B cell (primary cell): ENCODE measurements at regions of chr5 and their contacts with region 1.

Region 1: GRCh38 chr5:159331093-159331973 is 1.0 kb upstream of the IL12B start:
- DNase-seq: peak; percentile 83
- ATAC-seq: peak; percentile 55
- H3K4me3 ChIP-seq: peak overlapping the region in 4 of 5 experiments; percentile 51 to 65 (median 56)
- H3K4me3 Mint-ChIP-seq: peak overlapping the region; percentile 93
- H3K27ac ChIP-seq: peak overlapping the region; percentile 92 to 93
- H3K27ac Mint-ChIP-seq: peak overlapping the region; percentile 98
- H3K4me1 ChIP-seq: peaks cover 40 to 55% of the 10 kb centered on the region in 2 donors
- H3K4me1 Mint-ChIP-seq: peaks cover 49% of the 10 kb centered on the region
- H3K27me3 ChIP-seq: no peaks in the 10 kb centered on the region
- H3K27me3 Mint-ChIP-seq: no peaks in the 10 kb centered on the region
- CTCF ChIP-seq: peak; percentile 83

Region 2: DNA sequence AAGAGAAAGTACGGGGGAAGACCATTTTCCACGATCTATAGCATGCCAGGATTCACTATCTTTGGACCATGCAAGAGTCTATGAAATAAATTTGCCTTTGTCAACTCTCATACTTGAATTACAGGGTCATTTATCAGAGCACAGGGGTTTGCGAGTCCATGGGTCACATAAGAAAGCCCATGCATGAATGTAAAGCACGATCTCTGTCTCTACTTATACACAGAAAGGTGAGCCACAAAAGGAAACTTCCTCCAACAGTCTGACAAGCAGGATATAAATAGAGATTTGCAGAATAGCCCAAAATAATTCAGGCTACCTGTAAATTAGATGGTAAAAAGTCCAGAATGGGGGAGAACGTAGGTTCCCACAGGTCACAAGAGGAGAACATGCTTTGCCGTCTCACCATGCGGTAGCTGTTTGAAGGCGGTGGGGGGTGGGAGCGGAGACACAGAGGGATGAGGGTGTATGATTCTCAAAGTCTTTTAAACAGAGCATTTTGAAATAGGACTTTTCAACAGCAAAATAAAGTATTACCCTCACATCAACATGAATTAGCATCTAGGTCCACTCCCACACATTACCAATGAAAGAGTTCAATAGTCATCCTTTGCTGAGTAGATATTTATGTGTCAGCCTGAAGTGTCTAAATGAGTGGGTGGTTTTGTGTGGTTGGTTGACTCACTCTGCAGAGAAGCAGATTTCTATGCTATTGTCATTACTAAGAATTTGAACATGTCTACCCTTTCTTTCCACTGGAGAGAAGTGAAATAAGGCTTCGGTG is 511.3 kb before region 1 on chr5:
- CTCF ChIA-PET with region 1: no interaction called
- POLR2A ChIA-PET with region 1: no interaction called
- intact Hi-C with region 1: loop called (anchors 10 kb)
- DNase-seq: peak; percentile 55
- ATAC-seq: peak; percentile 56
- H3K4me3 ChIP-seq: peak overlapping the region; percentile 2 to 50 (median 19)
- H3K4me3 Mint-ChIP-seq: peak overlapping the region; percentile 82
- H3K27ac ChIP-seq: peak overlapping the region; percentile 82 to 87
- H3K27ac Mint-ChIP-seq: peak overlapping the region; percentile 80
- H3K4me1 ChIP-seq: peaks cover 98 to 99% of the 10 kb centered on the region in 2 donors
- H3K4me1 Mint-ChIP-seq: peaks cover 97% of the 10 kb centered on the region
- H3K27me3 ChIP-seq: no peaks in the 10 kb centered on the region
- H3K27me3 Mint-ChIP-seq: no peaks in the 10 kb centered on the region
- CTCF ChIP-seq: no peak

Region 3: GRCh38 chr5:159310511-159310910 is 20.8 kb before region 1 on chr5:
- CTCF ChIA-PET with region 1: interaction called, 7 read pairs
- POLR2A ChIA-PET with region 1: no interaction called
- intact Hi-C with region 1: loop called (anchors 2 kb)
- DNase-seq: peak; percentile 70
- ATAC-seq: peak; percentile 91
- H3K4me3 ChIP-seq: peak overlapping the region; percentile 16 to 61 (median 36)
- H3K4me3 Mint-ChIP-seq: peak overlapping the region; percentile 76
- H3K27ac ChIP-seq: no peak overlapping the region
- H3K27ac Mint-ChIP-seq: peak overlapping the region; percentile 2
- H3K4me1 ChIP-seq: peaks cover 13 to 19% of the 10 kb centered on the region in 2 donors
- H3K4me1 Mint-ChIP-seq: peaks cover 18% of the 10 kb centered on the region
- H3K27me3 ChIP-seq: peaks cover 0 to 6% (median 2%) of the 10 kb centered on the region in 4 experiments
- H3K27me3 Mint-ChIP-seq: peaks cover 10% of the 10 kb centered on the region
- CTCF ChIP-seq: no peak

Region 4: DNA sequence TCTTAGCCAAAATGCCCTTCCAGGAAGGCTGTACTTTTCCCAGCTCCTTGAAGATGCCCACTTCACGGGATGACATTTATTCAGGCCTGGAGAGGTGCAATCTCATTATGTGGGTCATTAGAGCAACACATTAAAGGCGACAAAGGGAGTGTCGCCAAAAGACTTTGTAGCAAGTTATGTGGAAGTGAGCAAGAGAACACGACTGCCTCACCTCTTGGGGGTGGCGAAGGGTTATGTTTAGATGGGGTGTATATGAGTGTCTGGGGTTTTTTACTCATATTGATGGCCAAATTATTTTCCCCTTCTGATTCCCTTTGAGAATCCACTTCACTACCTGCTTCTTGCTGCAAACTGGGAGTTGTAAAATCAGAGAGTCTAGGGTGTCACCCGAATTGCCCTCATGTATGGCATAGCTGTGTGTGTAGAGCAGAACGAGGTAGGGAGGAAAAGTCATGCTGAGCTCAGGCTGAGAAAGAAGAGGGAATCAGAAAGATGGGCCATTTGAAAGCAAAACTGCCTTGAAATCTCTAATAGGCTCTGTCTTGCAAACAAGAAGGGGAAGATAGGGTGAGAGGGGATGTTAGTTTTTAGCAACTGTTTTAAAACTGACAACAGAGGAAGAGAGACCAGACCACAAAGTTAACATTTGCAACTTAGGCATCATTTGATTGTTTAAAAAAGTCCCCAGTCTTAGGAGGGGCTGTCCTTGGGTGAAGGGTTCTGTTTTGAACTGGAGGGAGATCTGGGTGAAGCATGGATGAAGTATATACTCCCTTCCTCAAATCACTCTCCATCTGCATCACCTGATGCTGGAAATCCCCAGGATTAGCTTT is 96.1 kb after region 1 on chr5:
- CTCF ChIA-PET with region 1: interaction called, 7 read pairs
- POLR2A ChIA-PET with region 1: interaction called, 3 read pairs
- intact Hi-C with region 1: loop called (anchors 5 kb)
- DNase-seq: peak; percentile 74
- ATAC-seq: peak; percentile 85
- H3K4me3 ChIP-seq: peak overlapping the region in 1 of 5 experiments; percentile 17
- H3K4me3 Mint-ChIP-seq: peak overlapping the region; percentile 76
- H3K27ac ChIP-seq: peak overlapping the region; percentile 63 to 84
- H3K27ac Mint-ChIP-seq: peak overlapping the region; percentile 89
- H3K4me1 ChIP-seq: peaks cover 24 to 59% of the 10 kb centered on the region in 2 donors
- H3K4me1 Mint-ChIP-seq: peaks cover 44% of the 10 kb centered on the region
- H3K27me3 ChIP-seq: no peaks in the 10 kb centered on the region
- H3K27me3 Mint-ChIP-seq: no peaks in the 10 kb centered on the region
- CTCF ChIP-seq: no peak

Region 5: GRCh38 chr5:159773062-159773924 is 442.0 kb after region 1 on chr5:
- CTCF ChIA-PET with region 1: no interaction called
- POLR2A ChIA-PET with region 1: no interaction called
- intact Hi-C with region 1: loop called (anchors 5 kb)
- DNase-seq: peak; percentile 74
- ATAC-seq: peak; percentile 93
- H3K4me3 ChIP-seq: peak overlapping the region in 4 of 5 experiments; percentile 14 to 67 (median 48)
- H3K4me3 Mint-ChIP-seq: peak overlapping the region; percentile 81
- H3K27ac ChIP-seq: peak overlapping the region in 1 of 2 donors; percentile 12
- H3K27ac Mint-ChIP-seq: peak overlapping the region; percentile 78
- H3K4me1 ChIP-seq: peaks cover 9 to 12% of the 10 kb centered on the region in 2 donors
- H3K4me1 Mint-ChIP-seq: peaks cover 10% of the 10 kb centered on the region
- H3K27me3 ChIP-seq: peaks cover 0 to 21% (median 8%) of the 10 kb centered on the region in 4 experiments
- H3K27me3 Mint-ChIP-seq: peaks cover 33% of the 10 kb centered on the region
- CTCF ChIP-seq: peak; percentile 12

Region 6: GRCh38 chr5:160008877-160009590 is 677.7 kb after region 1 on chr5 and contains the start of gene TTC1:
- CTCF ChIA-PET with region 1: no interaction called
- POLR2A ChIA-PET with region 1: no interaction called
- intact Hi-C with region 1: loop called (anchors 5 kb)
- DNase-seq: peak; percentile 98
- ATAC-seq: peak; percentile 97
- H3K4me3 ChIP-seq: peak within 1 kb of the TSS; percentile 85 to 100 (median 98)
- H3K4me3 Mint-ChIP-seq: peak within 1 kb of the TSS; percentile 87
- H3K27ac ChIP-seq: peak within 1 kb of the TSS; percentile 77 to 96
- H3K27ac Mint-ChIP-seq: peak within 1 kb of the TSS; percentile 83
- H3K4me1 ChIP-seq: peaks cover 18 to 19% of the 10 kb centered on the region in 2 donors
- H3K4me1 Mint-ChIP-seq: peaks cover 25% of the 10 kb centered on the region
- H3K27me3 ChIP-seq: no peaks in the 10 kb centered on the region
- H3K27me3 Mint-ChIP-seq: no peaks in the 10 kb centered on the region
- CTCF ChIP-seq: no peak
- total RNA-seq, gene TTC1: 37.5 and 40.4 TPM in 2 replicates